ENCODE measurements at regions of chr1 and their contacts with region 1.

Region 1: DNA sequence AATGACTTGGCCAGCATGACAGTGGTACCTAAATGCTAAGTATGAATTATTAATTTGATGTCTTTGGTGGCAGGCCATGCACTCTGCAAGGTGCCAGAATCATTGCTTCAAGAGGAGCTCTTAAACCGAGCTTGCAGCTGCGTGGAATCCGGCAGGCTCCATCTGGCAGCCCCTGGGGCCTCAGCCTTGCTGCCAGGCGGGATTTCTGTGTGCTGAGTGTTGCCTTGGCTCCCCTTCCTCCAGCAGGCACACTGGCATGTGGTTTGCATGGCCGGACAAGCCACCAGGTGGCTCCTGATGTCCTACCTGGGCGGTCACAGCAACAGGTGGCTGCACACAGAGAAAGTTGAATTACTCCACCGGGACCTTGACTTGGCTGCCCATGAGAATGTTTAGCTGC is 155.4 kb downstream of the URB2 start:
- DNase-seq: no peak
- H3K4me3 ChIP-seq: no peak overlapping the region
- H3K4me3 Mint-ChIP-seq: no peak overlapping the region
- H3K27ac ChIP-seq: no peak overlapping the region
- H3K27ac Mint-ChIP-seq: no peak overlapping the region
- H3K4me1 ChIP-seq: no peaks in the 10 kb centered on the region
- H3K4me1 Mint-ChIP-seq: no peaks in the 10 kb centered on the region
- H3K27me3 ChIP-seq: no peaks in the 10 kb centered on the region
- H3K27me3 Mint-ChIP-seq: peaks cover 7 to 12% of the 10 kb centered on the region in 2 donors

Region 2: GRCh38 chr1:229221104-229222019 is 560.1 kb before region 1 on chr1:
- CTCF ChIA-PET with region 1: no interaction called
- POLR2A ChIA-PET with region 1: no interaction called
- intact Hi-C with region 1: no loop called
- DNase-seq: no peak
- H3K4me3 ChIP-seq: no peak overlapping the region
- H3K4me3 Mint-ChIP-seq: no peak overlapping the region
- H3K27ac ChIP-seq: no peak overlapping the region
- H3K27ac Mint-ChIP-seq: no peak overlapping the region
- H3K4me1 ChIP-seq: no peaks in the 10 kb centered on the region
- H3K4me1 Mint-ChIP-seq: peaks cover 0 to 3% (median 2%) of the 10 kb centered on the region in 4 donors
- H3K27me3 ChIP-seq: no peaks in the 10 kb centered on the region
- H3K27me3 Mint-ChIP-seq: peaks cover 1 to 3% of the 10 kb centered on the region in 2 donors

Region 3: DNA sequence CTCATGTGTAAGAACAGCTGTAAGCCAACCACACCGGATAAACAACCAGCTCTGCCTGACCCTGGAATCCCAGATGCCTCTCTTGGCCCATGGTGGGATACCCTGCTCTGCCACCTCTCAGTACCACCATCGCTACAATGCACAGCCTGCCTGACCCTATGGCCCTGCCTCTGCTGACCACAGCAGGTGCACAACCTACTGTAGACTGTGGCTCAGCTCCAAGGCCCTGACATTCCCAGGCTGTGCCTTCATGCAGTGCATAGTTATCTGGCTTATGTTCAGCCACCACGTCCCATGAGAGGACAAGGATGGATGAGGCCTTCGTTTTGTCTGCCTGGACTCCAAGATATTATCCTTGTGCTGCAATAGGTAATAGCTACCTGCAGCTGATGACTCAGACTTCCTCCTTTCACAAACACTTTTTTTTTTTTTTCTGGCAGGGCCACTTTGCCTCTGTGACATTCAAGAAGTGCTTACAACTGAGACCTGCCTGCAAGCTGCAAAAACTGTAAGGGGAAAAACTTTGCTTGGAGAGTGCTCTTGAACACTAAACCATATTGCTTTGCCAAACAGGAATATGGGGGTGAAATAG is 22.3 kb after region 1 on chr1:
- CTCF ChIA-PET with region 1: no interaction called
- POLR2A ChIA-PET with region 1: no interaction called
- intact Hi-C with region 1: no loop called
- DNase-seq: no peak
- H3K4me3 ChIP-seq: no peak overlapping the region
- H3K4me3 Mint-ChIP-seq: no peak overlapping the region
- H3K27ac ChIP-seq: no peak overlapping the region
- H3K27ac Mint-ChIP-seq: peak overlapping the region in 1 of 7 donors; percentile 16
- H3K4me1 ChIP-seq: no peaks in the 10 kb centered on the region
- H3K4me1 Mint-ChIP-seq: no peaks in the 10 kb centered on the region
- H3K27me3 ChIP-seq: no peaks in the 10 kb centered on the region
- H3K27me3 Mint-ChIP-seq: peaks cover 7 to 16% of the 10 kb centered on the region in 2 donors

Region 4: GRCh38 chr1:230167419-230167852 is 386.0 kb after region 1 on chr1:
- CTCF ChIA-PET with region 1: no interaction called
- POLR2A ChIA-PET with region 1: no interaction called
- intact Hi-C with region 1: loop called (anchors 5 kb)
- DNase-seq: peak; percentile 30 to 52 (median 47)
- H3K4me3 ChIP-seq: no peak overlapping the region
- H3K4me3 Mint-ChIP-seq: peak overlapping the region in 1 of 8 donors; percentile 7
- H3K27ac ChIP-seq: no peak overlapping the region
- H3K27ac Mint-ChIP-seq: peak overlapping the region in 3 of 7 donors; percentile 3 to 9 (median 9)
- H3K4me1 ChIP-seq: peaks cover 14% of the 10 kb centered on the region
- H3K4me1 Mint-ChIP-seq: peaks cover 14 to 25% (median 24%) of the 10 kb centered on the region in 4 donors
- H3K27me3 ChIP-seq: no peaks in the 10 kb centered on the region
- H3K27me3 Mint-ChIP-seq: no peaks in the 10 kb centered on the region

Measured in CD4-positive, alpha-beta memory T cell (primary cell).